PC-3 (cell line): ENCODE measurements at regions of chr10 and their contacts with region 1.

Region 1: GRCh38 chr10:119650692-119651513 is at the start of gene BAG3:
- DNase-seq: peak; percentile 84
- ATAC-seq: peak; percentile 68
- H3K4me3 ChIP-seq: peak within 1 kb of the TSS; percentile 94
- H3K27ac ChIP-seq: peak within 1 kb of the TSS; percentile 77
- H3K4me1 ChIP-seq: peaks cover 22% of the 10 kb centered on the region
- H3K27me3 ChIP-seq: no peaks in the 10 kb centered on the region
- CTCF ChIP-seq: no peak
- total RNA-seq, gene BAG3: 47.1 and 47.6 TPM in 2 replicates

Region 2: DNA sequence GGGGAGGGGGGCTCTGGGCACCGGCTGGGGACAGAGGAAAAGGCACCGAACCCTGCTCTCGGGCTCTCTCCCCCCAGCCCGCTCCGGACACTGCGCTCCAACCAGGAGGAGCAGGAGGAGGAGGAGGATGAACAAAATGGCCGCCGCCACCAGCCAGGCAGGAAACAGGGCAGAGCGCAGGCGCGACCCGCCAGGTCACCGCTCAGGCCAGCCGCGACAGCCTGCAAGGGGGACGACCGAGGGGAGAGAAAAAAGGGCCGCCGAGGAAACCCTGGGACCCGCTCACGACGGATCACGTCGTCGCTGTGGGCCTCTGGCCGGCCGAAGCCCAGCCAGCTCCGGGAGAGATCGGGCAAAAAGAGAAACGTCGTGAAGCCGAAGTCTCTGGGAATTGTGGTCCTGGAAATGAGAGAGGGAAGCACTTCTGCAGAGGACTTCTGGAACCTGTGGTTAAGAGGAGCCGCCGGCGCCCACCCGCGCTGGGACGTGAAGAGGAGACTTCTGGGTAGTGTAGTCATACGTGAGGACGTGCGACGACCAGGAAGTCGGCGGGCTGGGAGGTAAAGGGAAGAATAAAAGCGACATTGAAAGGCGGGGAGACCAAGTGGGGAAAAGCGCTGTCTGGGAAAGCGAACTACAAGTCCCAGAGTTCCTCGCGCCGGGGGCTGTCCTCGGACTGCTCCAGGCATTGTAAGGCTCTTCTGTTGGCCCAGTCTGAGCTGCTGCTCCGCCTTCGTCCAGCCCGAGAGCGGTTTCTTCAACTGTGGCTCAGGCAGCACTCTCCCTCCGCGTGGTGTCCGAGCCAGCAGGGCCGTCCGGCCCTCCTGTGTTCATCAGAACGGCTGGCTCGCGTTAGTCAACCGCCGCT is 54.1 kb before region 1 on chr10 and contains the start of gene TIAL1:
- CTCF ChIA-PET with region 1: no interaction called
- POLR2A ChIA-PET with region 1: no interaction called
- intact Hi-C with region 1: loop called (anchors 2 kb)
- DNase-seq: peak; percentile 96
- ATAC-seq: peak; percentile 86
- H3K4me3 ChIP-seq: peak within 1 kb of the TSS; percentile 99
- H3K27ac ChIP-seq: peak within 1 kb of the TSS; percentile 99
- H3K4me1 ChIP-seq: peaks cover 34% of the 10 kb centered on the region
- H3K27me3 ChIP-seq: no peaks in the 10 kb centered on the region
- CTCF ChIP-seq: no peak
- total RNA-seq, gene TIAL1: 42.8 and 46.6 TPM in 2 replicates

Region 3: DNA sequence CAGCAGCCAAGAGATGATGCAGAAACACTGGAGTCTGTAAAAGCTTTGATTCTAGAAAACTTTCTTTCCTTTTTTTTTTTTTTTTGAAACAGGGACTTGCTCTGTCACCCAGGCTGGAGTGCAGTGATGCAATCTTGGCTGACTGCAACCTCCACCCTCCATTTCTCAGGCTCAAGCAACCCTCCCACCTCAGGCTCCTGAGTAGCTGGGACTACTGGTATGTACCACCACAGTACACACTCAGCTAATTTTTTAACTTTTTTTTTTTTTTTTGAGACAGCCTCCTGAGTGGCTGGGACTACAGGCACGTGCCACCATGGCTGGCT is 16.7 kb before region 1 on chr10:
- CTCF ChIA-PET with region 1: no interaction called
- POLR2A ChIA-PET with region 1: interaction called, 11 read pairs
- intact Hi-C with region 1: no loop called
- DNase-seq: no peak
- ATAC-seq: no peak
- H3K4me3 ChIP-seq: no peak overlapping the region
- H3K27ac ChIP-seq: no peak overlapping the region
- H3K4me1 ChIP-seq: no peaks in the 10 kb centered on the region
- H3K27me3 ChIP-seq: no peaks in the 10 kb centered on the region
- CTCF ChIP-seq: no peak

Region 4: DNA sequence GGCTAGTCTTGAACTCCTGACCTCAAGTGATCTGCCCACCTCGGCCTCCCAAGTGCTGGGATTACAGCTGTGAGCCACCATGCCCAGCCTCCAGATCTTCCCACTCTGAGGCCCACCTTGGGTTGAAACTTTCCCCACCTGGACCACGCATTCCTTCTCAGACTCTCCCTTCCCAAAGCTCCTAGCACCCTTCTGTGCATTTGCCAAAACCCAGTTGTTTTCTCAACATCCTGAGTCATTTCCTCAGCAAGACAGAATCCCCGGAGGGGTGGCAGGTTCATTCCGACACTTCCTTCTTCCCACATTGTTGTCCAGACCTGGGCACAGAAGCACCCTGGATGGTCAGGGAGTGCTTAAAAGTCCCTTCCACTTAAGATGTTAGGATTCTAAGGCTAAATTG is 29.1 kb after region 1 on chr10:
- CTCF ChIA-PET with region 1: interaction called, 3 read pairs
- POLR2A ChIA-PET with region 1: interaction called, 3 read pairs
- intact Hi-C with region 1: loop called (anchors 2 kb)
- DNase-seq: peak; percentile 91
- ATAC-seq: peak; percentile 58
- H3K4me3 ChIP-seq: peak overlapping the region; percentile 33
- H3K27ac ChIP-seq: peak overlapping the region; percentile 100
- H3K4me1 ChIP-seq: peaks cover 72% of the 10 kb centered on the region
- H3K27me3 ChIP-seq: no peaks in the 10 kb centered on the region
- CTCF ChIP-seq: no peak